Right lobe of liver (tissue), 6 donors: ENCODE measurements at regions of chr20 and their contacts with region 1.

Region 1: DNA sequence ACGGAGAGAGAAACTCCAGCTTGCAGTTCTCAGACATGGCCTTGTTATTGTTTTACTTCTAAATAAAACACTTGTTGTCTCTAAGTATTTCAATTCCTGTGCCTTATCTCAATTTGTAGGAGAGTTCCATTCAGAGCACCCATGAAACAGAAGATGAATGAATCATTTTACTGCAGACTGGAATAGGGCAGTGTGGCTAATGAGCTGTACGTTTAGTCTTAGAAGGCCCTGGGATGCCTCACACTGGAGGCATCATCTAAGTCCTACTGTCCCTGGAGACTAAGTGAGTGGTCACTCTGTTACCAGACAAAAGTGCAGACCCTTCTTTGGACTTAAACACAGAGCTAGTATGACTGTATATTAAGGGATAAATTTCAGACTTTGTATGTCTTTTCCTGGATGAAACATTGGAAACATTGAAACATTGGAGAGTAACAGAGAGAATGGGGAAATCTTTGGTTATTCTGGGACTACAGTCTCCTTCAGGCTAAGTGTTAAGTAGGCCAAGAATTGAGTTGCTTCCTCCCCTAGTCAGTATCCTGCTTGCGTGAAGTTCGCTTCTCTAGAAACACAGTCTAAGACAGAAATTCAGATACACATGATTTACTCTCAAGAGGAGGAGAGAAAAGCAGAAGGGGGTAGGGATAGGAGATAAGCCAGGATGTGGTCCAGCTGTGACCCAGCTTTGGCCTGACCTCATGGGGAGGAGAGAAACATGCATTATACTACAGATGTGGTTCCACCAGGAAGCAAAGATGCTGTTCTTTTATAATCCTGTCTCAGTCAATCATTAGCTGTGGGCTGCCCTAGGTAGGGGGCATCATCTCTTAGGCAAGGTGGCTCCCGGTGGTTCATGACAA is 167.4 kb upstream of the BMP2 start:
- DNase-seq: no peak
- ATAC-seq: no peak
- H3K4me3 ChIP-seq: no peak overlapping the region
- H3K27ac ChIP-seq: no peak overlapping the region
- H3K4me1 ChIP-seq: no peaks in the 10 kb centered on the region
- H3K27me3 ChIP-seq: no peaks in the 10 kb centered on the region
- CTCF ChIP-seq: no peak
- POLR2A ChIP-seq: no peak

Region 2: DNA sequence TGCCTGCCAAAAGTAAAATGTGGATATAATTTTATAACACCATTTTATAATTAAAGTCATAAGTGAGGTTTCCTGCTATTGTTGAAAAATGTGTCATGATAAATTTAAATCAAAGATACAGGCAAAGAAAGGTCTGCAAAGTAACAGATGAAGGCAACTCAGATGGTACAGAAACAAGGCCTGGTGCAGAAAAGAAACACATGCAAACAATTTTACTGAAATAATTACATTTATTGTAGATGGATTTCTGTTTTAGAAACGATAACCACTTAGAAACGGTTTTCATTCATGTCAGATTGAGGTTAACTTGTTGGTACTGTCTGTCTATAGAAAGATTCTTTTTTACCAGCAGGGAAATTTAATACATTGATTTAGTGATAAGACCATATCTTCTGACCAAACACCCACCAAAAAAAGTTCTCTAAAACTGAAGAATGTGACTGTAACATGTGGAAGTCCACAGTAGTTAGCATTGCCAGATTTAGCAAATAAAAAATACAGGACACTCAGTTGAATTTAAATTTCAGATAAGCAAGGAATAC is 371.7 kb before region 1 on chr20:
- intact Hi-C with region 1: loop called in 1 of 2 experiments (anchors 10 kb)
- DNase-seq: no peak
- ATAC-seq: no peak
- H3K4me3 ChIP-seq: no peak overlapping the region
- H3K27ac ChIP-seq: no peak overlapping the region
- H3K4me1 ChIP-seq: no peaks in the 10 kb centered on the region
- H3K27me3 ChIP-seq: no peaks in the 10 kb centered on the region
- CTCF ChIP-seq: no peak
- POLR2A ChIP-seq: no peak